ENCODE measurements at regions of chr17 and their contacts with region 1.

Region 1: GRCh38 chr17:8630802-8631553 is 453 bp upstream of the MYH10 start:
- DNase-seq: peak; percentile 94 to 95
- ATAC-seq: peak; percentile 97 to 98
- H3K4me3 ChIP-seq: peak overlapping the region; percentile 80 to 96 (median 92)
- H3K27ac ChIP-seq: peak overlapping the region; percentile 71 to 80 (median 74)
- H3K4me1 ChIP-seq: peaks cover 0 to 10% of the 10 kb centered on the region in 2 donors
- H3K27me3 ChIP-seq: peaks cover 0 to 6% (median 0%) of the 10 kb centered on the region in 3 donors
- CTCF ChIP-seq: peak in 2 of 5 experiments; percentile 18 to 21
- POLR2A ChIP-seq: peak; percentile 9 to 13

Region 2: GRCh38 chr17:8435245-8436168 is 195.5 kb before region 1 on chr17 and contains the start of gene NDEL1:
- in situ Hi-C with region 1: no loop called
- intact Hi-C with region 1: loop called (anchors 10 kb)
- DNase-seq: peak; percentile 98
- ATAC-seq: peak; percentile 88 to 91
- H3K4me3 ChIP-seq: peak within 1 kb of the TSS; percentile 76 to 94 (median 84)
- H3K27ac ChIP-seq: peak within 1 kb of the TSS; percentile 92 to 99 (median 98)
- H3K4me1 ChIP-seq: peaks cover 21 to 22% of the 10 kb centered on the region in 2 donors
- H3K27me3 ChIP-seq: no peaks in the 10 kb centered on the region
- CTCF ChIP-seq: no peak
- POLR2A ChIP-seq: peak; percentile 99 to 100
- total RNA-seq, gene NDEL1: 31.3 to 60.6 (median 41.5) TPM

Region 3: DNA sequence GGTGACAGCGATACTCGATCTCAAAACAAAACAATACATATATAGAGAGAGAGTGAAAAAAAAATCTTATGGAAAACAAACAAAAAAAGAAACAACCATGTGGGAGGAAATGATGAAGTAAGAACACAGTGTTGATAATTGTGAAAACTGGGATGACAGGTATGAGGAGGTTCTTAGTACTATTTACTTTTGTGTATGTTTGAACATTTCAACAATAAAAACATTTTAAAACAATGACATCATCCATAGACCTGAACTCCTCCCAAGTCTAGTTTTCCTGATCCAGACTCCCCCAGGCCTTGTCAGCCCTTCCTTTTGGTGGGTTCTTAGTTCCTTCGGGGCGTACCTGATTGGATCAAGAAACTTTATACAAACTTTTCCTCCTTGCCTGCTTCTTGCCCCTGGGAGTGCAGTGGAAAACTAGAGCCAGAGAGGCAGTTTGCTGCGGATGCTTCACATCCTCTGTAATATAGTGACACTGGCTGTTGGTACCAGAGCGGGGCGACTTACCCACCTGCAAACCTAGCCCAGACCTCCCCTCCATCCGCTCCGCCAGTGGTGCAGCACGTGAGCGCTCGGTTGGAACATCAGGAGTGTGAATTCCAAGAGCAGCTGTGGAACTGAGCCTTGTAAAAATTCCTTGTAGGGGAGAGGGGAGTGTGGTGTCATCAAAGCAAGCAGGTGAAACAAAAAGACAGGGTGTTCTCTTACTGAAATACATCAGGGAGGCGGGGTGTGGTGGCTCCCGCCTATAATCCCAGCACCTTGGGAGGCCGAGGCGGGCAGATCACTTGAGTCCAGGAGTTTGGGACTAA is 62.1 kb after region 1 on chr17:
- in situ Hi-C with region 1: no loop called
- intact Hi-C with region 1: no loop called
- DNase-seq: no peak
- ATAC-seq: no peak
- H3K4me3 ChIP-seq: no peak overlapping the region
- H3K27ac ChIP-seq: no peak overlapping the region
- H3K4me1 ChIP-seq: no peaks in the 10 kb centered on the region
- H3K27me3 ChIP-seq: peaks cover 0 to 3% (median 0%) of the 10 kb centered on the region in 3 donors
- CTCF ChIP-seq: no peak
- POLR2A ChIP-seq: no peak